ENCODE measurements at regions of chr1 and their contacts with region 1.

Region 1: GRCh38 chr1:36609241-36610027 is 126.7 kb upstream of the CSF3R start:
- DNase-seq: peak; percentile 47 to 85
- H3K4me3 ChIP-seq: no peak overlapping the region
- H3K27ac ChIP-seq: no peak overlapping the region
- H3K4me1 ChIP-seq: no peaks in the 10 kb centered on the region; a peak in 1 of 7 replicates
- H3K27me3 ChIP-seq: peaks cover 0 to 2% (median 0%) of the 10 kb centered on the region in 4 experiments; a peak in 1 of 7 replicates
- CTCF ChIP-seq: peak; percentile 92 to 95 (median 93)
- EP300 ChIP-seq: no peak
- POLR2A ChIP-seq: no peak
- RAD21 ChIP-seq: peak; percentile 96 to 97

Region 2: DNA sequence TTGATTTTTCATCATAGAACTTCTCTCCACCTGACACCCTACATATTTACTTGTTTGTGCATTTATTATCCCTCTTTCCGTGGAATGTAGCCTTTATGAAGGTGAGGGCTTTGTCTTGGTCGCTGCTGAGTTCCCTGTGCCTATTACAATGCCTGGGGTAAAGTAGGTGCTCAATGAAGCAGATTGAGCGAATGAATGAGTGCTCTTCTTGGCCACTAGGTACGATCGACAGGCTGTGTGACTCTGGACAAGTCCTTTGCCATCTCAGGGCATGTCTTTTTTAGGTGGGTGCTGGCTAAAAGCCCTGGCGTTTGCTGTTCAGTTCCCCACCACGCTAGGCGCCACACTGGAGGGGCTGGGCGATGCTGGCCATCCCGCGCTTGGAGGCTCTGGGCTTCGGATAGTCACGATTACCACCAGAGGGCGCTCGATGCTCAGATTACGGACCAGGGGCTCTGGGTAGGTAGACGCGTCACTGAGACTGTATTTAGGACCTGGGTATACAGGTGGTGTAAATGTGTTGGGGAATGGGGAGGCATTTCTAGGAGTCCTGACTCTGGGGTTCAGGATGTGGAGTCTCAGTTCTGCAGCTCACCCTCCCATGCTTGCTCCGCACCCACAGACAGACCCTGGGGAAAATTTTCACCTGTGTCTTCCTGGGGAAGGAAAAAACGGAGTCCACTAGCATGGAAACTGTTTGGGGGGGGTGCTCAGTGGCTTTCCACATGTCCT is 55.7 kb before region 1 on chr1:
- CTCF ChIA-PET with region 1: interaction called, 14 read pairs
- POLR2A ChIA-PET with region 1: no interaction called
- DNase-seq: peak; percentile 58 to 93
- H3K4me3 ChIP-seq: no peak overlapping the region
- H3K27ac ChIP-seq: no peak overlapping the region
- H3K4me1 ChIP-seq: no peaks in the 10 kb centered on the region
- H3K27me3 ChIP-seq: peaks cover 0 to 5% (median 2%) of the 10 kb centered on the region in 4 experiments; a peak in 4 of 7 replicates
- CTCF ChIP-seq: peak; percentile 85 to 97 (median 91)
- EP300 ChIP-seq: no peak
- POLR2A ChIP-seq: no peak
- RAD21 ChIP-seq: peak; percentile 97

Region 3: DNA sequence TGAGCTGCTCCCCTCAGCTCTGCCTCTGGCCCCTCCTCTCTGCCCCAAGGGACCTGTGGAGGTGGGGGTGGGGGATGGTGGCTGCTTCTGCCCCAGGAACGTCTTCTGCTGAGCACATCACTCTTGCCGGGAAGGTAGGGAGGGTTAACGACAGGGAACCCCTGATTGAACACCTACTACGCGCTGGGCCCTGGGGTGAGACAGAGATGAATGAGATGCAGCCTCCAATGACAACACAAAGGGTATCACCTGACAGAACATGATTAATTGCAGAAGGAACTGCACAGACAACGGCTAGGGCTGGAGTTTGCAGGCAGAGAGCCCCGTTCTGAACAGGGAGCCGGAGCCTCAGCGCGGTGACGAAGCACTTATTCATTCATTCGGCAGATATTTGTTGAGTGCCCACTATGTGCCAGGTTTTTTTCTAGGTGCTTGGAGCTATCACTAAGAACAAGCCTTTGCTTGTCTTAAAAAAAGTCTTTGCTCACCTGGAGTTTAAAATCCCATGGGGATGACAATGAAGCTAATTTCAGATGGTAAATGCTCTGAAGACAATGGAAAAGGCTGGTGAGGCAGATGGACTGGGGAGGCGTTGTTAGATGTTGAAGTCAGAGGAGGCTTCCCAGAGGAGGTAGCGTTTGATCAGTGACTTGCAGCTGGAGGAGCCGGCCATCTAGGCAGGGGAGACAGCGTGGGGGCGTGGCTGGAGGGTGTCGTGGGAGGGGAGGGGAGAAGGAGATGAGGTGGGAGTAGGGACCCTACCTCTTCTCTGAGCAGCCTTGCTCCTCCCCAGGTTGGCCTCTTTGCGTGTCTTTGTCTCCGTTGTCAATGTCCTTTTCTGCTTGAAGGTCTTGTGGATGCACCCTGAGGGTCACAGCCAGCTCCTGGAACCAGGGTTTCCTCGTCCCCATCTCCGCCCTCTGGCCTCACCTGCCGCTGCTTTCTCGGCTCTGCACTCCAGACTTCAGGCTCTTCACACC is 23.6 kb before region 1 on chr1:
- CTCF ChIA-PET with region 1: interaction called, 94 read pairs
- POLR2A ChIA-PET with region 1: no interaction called
- DNase-seq: no peak
- H3K4me3 ChIP-seq: no peak overlapping the region
- H3K27ac ChIP-seq: no peak overlapping the region
- H3K4me1 ChIP-seq: peaks cover 12 to 38% (median 21%) of the 10 kb centered on the region in 4 experiments
- H3K27me3 ChIP-seq: no peaks in the 10 kb centered on the region; a peak in 1 of 7 replicates
- CTCF ChIP-seq: no peak
- EP300 ChIP-seq: no peak
- POLR2A ChIP-seq: no peak
- RAD21 ChIP-seq: no peak

Region 4: GRCh38 chr1:36622741-36623648 is 13.6 kb after region 1 on chr1:
- CTCF ChIA-PET with region 1: interaction called, 45 read pairs
- POLR2A ChIA-PET with region 1: no interaction called
- DNase-seq: no peak
- H3K4me3 ChIP-seq: no peak overlapping the region
- H3K27ac ChIP-seq: no peak overlapping the region
- H3K4me1 ChIP-seq: peaks cover 0 to 7% (median 6%) of the 10 kb centered on the region in 4 experiments; a peak in 6 of 7 replicates
- H3K27me3 ChIP-seq: 0 out of 7 replicates have a peak, but pooled peaks cover 0 to 2% (median 0%) of the 10 kb centered on the region in 4 experiments
- CTCF ChIP-seq: no peak
- EP300 ChIP-seq: no peak
- POLR2A ChIP-seq: no peak
- RAD21 ChIP-seq: no peak

Region 5: DNA sequence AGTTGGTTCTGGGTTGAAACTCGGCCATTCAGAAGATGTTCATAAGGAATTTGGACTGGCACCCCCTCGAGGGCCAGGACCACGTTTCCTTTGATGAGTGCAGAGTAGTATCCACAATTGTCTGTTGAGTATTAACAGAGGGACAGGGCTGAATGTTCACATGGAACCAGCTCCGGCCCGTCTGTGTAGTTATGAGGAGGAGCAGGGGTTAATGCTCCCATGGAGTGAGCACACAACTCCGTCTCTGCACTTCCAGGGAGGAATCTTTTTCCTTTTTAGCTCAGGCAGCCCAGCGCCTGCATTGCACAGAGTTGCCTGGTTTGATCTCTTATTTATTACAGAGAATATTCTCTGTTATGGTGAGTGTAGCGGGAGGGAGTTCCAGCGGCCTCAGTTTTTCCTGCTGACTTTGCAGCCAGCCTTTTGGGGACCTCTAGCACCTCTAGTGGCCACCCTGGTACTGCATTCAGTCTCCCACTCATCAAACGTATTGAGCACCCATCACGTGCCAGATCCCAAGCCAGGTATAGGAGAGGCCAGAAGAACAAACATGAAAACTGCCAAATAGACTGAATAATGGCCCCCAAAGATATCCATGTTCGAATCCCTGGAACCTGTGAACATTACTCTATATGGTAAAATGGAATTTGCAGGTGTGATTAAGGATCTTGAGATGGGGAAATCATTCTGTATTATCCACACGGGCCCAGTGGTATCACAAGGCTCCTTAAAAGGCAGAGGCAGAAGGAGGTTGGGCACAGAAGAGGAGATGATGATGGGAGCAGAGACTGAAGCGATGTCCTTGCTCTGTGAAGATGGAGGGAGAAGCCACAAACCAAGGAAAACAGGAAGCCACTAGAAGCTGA is 41.0 kb after region 1 on chr1:
- CTCF ChIA-PET with region 1: interaction called, 303 read pairs
- POLR2A ChIA-PET with region 1: no interaction called
- DNase-seq: peak; percentile 29 to 96
- H3K4me3 ChIP-seq: no peak overlapping the region
- H3K27ac ChIP-seq: no peak overlapping the region
- H3K4me1 ChIP-seq: peaks cover 0 to 3% (median 3%) of the 10 kb centered on the region in 4 experiments; a peak in 3 of 7 replicates
- H3K27me3 ChIP-seq: peaks cover 0 to 2% (median 0%) of the 10 kb centered on the region in 4 experiments; a peak in 2 of 7 replicates
- CTCF ChIP-seq: peak; percentile 85 to 91 (median 85)
- EP300 ChIP-seq: no peak
- POLR2A ChIP-seq: no peak
- RAD21 ChIP-seq: peak; percentile 70 to 77

Measured in H1 (cell line).